ENCODE measurements at regions of chr20 and their contacts with region 1.

Region 1: DNA sequence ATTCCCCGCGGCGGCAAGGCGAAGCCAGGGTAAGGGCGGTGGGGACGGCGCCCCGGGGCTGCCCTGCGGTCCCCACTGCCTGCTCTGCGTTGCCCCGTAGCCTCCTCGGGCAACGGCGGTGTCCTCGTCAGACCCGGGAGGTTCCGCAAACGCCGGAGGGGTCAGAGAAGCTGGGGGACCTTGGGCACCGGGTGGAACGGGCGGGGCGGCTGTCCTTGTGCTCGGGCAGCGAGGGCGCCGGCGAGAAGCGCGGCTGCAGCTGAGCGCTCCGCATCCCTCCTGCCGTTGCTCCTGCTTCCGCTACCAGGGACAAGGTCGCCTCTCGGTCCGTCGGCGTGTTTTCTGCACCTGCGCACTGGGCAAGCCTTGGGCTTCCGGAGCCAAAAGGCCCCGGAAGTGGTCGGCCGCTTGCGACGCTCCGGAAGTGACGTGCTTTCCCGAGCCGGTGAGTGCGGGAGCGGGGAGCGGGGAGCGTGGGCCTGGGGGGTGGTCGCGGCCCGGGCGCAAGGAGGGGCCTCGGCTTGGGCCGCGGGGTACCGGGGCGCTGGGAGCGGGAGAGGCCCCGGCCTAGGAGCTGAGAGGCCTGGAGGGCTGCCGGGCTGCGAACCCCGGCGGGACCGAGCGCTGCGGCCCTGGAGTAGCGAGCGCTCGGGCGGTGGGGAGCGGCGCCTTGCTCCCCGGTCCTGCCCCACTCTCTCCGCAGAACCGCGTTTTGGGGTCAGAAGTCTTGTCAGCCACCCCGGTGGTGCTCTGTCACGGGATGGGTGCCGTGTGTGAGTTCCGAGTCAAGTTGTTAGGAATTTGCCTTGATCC is at the start of gene MTG2:
- H3K4me3 Mint-ChIP-seq: peak within 1 kb of the TSS; percentile 87
- H3K27ac Mint-ChIP-seq: peak within 1 kb of the TSS; percentile 94
- H3K4me1 Mint-ChIP-seq: peaks cover 45% of the 10 kb centered on the region
- H3K27me3 Mint-ChIP-seq: no peaks in the 10 kb centered on the region

Region 2: DNA sequence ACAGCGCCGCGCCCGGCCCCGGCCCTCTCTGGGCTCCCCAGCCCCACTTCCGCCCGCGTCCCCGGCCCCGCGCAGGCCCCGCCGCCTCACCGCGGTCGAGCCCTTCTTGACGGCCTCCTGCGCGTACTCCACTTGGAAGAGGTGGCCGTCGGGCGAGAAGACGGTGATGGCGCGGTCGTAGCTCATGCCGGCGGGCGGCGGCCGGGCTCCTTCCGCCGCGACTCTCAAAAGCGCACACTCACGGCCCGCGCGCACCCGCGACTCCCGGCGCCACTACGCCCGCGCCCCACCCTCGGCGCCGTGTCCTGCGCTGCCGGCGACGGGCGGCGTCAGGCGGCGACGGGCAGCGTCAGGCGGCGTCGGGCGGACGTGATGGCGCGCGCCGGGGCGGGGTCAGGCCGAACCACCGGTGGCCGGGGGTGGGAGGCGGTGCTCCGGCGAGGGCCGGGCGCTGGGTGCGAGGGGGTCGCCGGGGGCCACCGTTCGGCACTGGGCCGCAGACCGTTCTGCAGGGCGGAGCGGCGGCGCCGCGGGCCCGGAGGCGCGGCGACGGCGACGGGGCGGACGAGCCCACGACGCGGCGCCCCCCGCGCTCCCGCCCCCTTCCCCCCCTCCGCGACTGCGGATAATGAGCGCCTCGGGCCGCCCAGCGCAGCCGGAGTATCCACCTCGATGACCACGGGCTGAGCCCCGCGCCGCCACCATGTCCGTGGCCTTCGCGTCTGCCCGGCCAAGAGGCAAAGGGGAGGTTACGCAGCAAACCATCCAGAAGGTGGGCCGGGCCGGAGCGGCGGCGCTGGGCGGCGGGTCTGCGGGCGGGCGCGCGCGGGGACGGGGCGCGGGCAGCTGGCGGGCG is 39.5 kb before region 1 on chr20 and contains the starts of genes PSMA7 and SS18L1:
- intact Hi-C with region 1: loop called (anchors 2 kb)
- H3K4me3 Mint-ChIP-seq: peak within 1 kb of the TSS; percentile 86
- H3K27ac Mint-ChIP-seq: peak within 1 kb of the TSS; percentile 88
- H3K4me1 Mint-ChIP-seq: peaks cover 58% of the 10 kb centered on the region
- H3K27me3 Mint-ChIP-seq: no peaks in the 10 kb centered on the region

Region 3: DNA sequence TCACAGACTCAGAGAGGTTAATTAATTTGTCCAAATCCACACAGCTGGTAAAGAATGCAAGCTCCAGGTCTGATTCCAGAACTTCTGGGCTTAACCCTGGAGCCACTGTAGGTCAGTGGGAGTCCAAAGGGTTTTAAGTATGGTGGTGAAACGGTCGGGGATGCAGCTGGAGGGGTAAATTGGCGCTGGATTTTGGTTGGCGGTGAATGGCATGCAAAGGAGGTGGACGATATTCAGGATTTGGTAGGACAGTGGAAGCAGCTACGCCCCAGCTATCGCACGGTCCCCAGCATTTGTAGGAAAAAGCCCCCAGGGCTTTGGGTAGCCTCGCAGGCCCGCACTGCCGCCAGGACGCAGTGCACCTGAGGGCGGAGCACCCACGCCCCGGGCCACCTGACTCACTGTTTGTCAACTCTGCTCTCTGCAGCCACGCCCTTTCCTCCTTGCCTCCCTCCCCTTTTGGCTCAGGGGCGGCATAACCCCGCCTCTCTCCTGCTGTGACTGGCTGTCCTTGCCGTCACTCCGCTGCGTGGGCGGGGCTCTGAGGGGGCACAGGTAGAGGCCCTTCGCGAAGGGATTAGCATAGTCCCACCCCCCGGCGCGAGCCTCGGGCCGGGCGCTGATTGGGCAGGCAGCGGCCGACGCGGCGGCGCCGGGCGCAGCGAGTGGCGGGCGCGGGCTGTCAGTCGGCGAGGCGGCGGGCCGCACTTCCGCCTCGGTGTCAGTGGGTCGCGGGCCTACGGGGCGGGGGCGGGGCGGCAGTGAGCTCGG is 55.2 kb after region 1 on chr20 and contains the start of gene OSBPL2:
- intact Hi-C with region 1: loop called (anchors 2 kb)
- H3K4me3 Mint-ChIP-seq: peak within 1 kb of the TSS; percentile 89
- H3K27ac Mint-ChIP-seq: peak within 1 kb of the TSS; percentile 65
- H3K4me1 Mint-ChIP-seq: peaks cover 45% of the 10 kb centered on the region
- H3K27me3 Mint-ChIP-seq: peaks cover 8% of the 10 kb centered on the region

Region 4: DNA sequence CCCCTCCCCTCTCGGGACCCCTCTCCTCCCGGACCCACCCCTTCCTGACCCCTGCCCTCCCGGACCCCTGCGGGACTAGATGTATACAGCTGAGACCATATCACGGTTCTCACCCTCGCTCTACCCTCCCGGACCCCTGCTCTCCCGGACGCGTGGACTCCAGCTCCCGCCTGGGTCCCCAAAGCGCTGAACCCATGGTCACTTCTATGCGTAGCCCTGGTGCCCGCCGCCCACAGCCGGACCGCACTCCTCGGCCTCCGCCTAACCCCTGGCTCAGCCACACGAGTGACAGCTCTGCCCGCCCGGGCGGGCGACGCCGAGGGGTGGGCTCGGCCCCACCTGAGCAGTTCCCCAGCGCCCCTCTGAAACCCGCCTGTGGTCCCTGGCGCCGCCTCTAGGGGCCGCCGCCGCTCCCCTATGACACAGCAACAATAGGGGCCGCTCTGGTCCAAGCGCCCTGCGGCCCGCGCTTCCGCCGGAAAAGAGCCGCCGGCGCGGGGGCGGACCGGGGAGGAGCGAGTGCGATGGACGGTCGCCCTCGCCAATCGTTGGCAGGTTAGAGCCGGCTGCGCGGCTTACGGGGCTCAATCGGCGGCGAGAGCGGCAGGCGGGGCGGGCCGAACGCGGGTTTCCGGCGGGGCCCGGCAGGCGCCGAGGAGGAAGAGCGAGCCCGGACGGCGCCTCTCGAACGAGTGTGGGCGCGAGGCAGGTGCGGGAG is 119.7 kb after region 1 on chr20 and contains the start of gene ADRM1:
- intact Hi-C with region 1: loop called (anchors 5 kb)
- H3K4me3 Mint-ChIP-seq: peak within 1 kb of the TSS; percentile 92
- H3K27ac Mint-ChIP-seq: peak within 1 kb of the TSS; percentile 99
- H3K4me1 Mint-ChIP-seq: peaks cover 38% of the 10 kb centered on the region
- H3K27me3 Mint-ChIP-seq: no peaks in the 10 kb centered on the region

Region 5: DNA sequence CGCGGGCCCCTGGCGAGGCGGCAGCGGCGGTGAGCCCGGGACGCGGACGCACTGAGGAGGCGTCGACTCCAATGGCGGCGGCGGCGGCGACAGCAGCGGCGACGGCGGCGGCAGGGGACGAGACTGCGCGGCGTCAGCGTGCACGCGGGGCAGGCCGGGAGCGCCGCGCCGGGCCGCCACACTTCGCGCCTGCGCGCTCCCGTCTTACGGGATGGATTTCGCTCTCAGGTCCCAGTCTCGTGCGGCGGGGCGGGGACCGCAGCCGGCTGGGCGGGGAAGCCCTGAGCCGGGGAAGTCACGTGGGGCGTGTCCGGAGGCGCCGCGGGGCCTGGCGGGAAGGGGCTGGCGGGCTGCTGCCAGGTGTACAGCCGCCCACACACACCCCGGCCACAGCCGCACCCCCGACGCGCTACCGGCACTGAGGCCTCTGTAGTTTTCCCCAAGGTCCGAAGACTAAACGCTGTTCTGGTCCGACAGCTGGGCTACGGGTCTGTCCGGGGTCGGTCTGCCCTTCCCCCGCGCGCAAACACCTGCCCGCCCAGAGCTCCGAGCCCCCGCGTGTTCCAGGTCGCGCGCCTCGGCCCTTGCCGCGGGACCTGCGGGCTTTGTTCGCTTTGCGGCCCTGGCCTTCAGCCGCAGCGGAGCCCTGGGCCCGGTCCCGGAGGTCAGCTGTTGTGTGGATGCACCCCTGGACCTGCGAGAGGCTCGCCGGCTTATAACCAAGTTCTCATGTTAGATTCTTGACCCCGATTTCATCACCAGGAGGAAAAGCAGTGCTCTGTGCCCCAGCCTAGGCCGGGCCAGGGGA is 1033.4 kb after region 1 on chr20 and contains the start of gene YTHDF1:
- intact Hi-C with region 1: loop called (anchors 10 kb)
- H3K4me3 Mint-ChIP-seq: peak within 1 kb of the TSS; percentile 86
- H3K27ac Mint-ChIP-seq: peak within 1 kb of the TSS; percentile 81
- H3K4me1 Mint-ChIP-seq: peaks cover 45% of the 10 kb centered on the region
- H3K27me3 Mint-ChIP-seq: peaks cover 11% of the 10 kb centered on the region